ENCODE measurements at regions of chr1 and their contacts with region 1.

Region 1: GRCh38 chr1:184982002-184982954 is 8.0 kb upstream of the NIBAN1 start:
- DNase-seq: peak; percentile 62
- ATAC-seq: peak; percentile 100
- H3K4me3 Mint-ChIP-seq: no peak overlapping the region
- H3K27ac Mint-ChIP-seq: no peak overlapping the region
- H3K4me1 Mint-ChIP-seq: peaks cover 5% of the 10 kb centered on the region
- H3K27me3 Mint-ChIP-seq: no peaks in the 10 kb centered on the region
- CTCF ChIP-seq: no peak

Region 2: DNA sequence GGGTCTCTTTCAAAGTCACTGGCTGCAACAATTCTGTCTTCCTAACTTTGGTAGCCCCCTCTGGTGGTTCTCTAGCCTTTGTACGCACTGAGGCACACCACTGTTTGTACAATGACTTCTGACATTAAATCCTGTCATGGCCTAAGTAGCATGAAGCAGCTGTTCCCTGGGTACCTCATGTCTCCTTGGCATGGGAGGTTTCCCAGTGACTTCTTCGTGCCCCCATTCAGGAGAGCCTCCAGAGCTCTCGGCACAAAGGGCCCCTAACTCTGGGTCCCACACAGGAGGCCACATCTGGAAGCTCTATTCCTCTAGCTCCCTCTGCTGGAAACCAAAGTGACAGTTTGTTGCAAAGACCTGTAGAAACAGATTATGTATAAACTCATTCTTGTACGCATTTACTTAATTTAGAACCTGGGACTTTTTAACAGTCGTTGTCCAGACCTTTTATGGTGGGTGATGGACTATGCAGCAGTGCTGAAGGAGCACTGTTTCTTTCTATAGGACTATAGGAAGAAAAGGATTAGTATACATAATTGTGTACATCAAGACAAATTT is 188.1 kb after region 1 on chr1:
- CTCF ChIA-PET with region 1: interaction called, 6 read pairs
- POLR2A ChIA-PET with region 1: no interaction called
- intact Hi-C with region 1: loop called (anchors 1 kb)
- DNase-seq: peak; percentile 30
- ATAC-seq: peak; percentile 83
- H3K4me3 Mint-ChIP-seq: peak overlapping the region; percentile 19
- H3K27ac Mint-ChIP-seq: no peak overlapping the region
- H3K4me1 Mint-ChIP-seq: peaks cover 8% of the 10 kb centered on the region
- H3K27me3 Mint-ChIP-seq: no peaks in the 10 kb centered on the region
- CTCF ChIP-seq: peak; percentile 82